GM12878 (cell line): ENCODE measurements at regions of chr11 and their contacts with region 1.

Region 1: DNA sequence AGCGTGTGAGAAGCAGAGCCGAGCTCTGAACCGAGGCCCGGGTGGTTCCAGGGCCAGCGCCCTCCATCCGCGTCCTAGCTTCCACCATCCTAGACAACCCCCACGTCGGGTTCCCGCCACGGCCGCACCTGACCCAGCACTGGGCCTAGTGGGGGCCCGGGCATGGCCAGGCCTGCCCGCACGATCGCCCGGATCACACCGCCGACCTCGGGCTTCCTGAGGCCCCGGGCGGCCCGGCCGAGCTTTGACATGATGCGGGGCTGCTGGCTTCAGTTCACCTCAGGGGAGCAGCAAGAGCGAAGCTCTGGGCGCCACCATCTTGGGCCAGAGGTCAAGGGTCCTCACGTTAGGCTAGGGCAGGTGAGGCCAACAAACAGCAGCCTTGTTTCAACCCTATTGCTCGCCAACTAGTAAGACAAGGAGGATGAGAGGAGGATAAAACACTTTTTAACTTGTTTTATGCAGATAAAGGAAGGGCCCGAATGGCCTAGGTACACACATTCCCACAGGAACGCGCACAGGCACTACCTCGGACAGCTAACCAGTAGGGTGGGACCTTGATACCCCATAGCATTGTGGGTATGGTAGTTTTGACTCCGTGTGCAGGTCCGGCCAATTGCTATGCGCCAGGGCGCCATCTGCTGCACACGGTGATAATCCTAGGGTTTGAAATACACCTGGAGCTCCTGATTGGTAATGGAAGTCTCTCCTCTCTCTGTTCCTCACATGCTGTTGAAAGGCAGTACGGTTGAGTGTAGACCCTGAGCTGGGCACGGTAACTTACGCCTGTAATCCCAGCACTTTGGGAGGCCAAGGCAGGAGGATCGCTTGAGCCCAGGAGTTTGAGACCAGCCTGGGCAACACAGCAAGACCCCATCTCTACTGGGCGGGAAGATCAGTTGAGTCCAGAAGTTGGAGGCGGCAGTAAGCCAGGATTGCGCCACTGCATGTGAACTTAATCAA is at the start of gene MRPL11:
- DNase-seq: peak; percentile 95
- ATAC-seq: peak; percentile 99
- H3K4me3 ChIP-seq: peak within 1 kb of the TSS; percentile 98
- H3K27ac ChIP-seq: peak within 1 kb of the TSS; percentile 85
- H3K4me1 ChIP-seq: no peaks in the 10 kb centered on the region
- H3K27me3 ChIP-seq: no peaks in the 10 kb centered on the region; a peak in 1 of 4 replicates
- CTCF ChIP-seq: peak; percentile 66 to 91 (median 87)
- EP300 ChIP-seq: no peak
- POLR2A ChIP-seq: peak; percentile 82
- RAD21 ChIP-seq: peak; percentile 37; the same call in 1 of the 2 replicates
- polyA plus RNA-seq, gene MRPL11: 43.5 to 80.9 TPM

Region 2: DNA sequence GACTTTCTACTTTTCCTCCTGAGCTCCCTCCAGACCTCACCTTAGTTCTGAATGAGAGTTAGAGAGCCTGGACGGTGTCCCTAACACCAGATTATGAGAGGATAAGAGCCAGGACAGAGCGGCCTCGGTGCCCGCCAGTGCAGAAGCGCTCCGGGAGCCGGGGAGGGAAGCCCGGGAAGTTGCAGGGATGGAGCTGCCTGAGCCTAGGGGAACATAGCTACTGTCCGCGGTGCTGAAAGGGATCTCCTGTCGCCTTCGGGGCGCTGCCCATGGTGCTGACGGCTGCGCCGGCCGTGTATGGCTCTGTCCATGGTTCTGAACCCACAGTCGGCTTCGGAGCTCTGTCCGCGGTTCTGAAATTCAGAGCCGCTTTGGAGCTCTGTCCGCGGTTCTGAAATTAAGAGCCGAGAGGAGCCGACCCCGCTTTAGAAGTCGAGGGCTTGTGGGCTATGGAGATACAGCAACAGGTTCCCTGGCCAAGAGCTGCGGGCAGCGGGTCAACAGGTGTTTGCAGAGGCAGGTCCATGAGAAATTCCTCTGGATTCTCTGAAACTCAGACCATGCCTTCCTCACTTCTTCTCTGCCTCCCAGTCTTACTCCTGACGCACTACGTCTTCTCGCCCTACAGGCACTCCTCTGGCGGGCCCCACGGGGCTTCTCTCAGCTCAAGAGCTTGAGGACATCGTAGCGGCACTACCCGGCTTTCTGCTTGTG is 17.1 kb before region 1 on chr11:
- CTCF ChIA-PET with region 1: interaction called, 18 read pairs
- POLR2A ChIA-PET with region 1: interaction called, 3 read pairs
- RAD21 ChIA-PET with region 1: interaction called, 10 read pairs
- SMC1A ChIA-PET with region 1: interaction called, 6 read pairs
- in situ Hi-C with region 1: no loop called
- intact Hi-C with region 1: no loop called
- DNase-seq: peak; percentile 37
- ATAC-seq: peak; percentile 57
- H3K4me3 ChIP-seq: no peak overlapping the region
- H3K27ac ChIP-seq: no peak overlapping the region
- H3K4me1 ChIP-seq: peaks cover 3% of the 10 kb centered on the region; the same call in 1 of the 2 replicates
- H3K27me3 ChIP-seq: peaks cover 0 to 8% of the 10 kb centered on the region in 2 experiments; a peak in 1 of 4 replicates
- CTCF ChIP-seq: no peak
- EP300 ChIP-seq: no peak
- POLR2A ChIP-seq: no peak
- RAD21 ChIP-seq: no peak

Region 3: DNA sequence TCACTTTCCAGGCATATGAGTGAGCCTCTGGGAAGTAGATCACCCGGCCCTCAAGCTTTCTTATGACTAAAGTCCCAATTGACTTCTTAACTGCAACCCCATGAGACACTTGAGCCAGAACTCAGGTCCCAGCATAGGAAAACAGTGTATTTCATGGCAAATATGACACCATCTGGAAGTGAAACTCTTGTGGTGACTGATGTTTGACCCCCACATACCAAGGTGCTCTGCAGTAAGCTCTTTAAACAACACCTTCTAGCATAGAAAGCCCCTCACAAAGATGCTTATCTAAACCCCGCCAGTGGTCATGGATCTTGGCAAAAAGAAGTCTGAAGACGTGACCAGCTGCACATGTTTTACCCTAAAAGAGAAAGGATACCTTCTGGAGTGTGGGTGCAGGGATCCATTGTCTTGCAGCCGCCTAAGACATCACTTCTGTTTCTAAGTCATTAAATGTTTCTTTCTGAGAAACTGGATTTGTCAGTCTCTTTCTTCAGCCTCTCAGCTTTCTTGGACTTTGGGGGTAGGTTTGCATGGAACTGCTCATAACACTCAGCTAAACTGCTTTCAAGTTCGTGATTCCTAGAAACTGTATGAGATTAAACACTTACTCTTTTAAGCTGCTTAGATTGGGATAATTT is 20.5 kb after region 1 on chr11:
- CTCF ChIA-PET with region 1: interaction called, 46 read pairs
- POLR2A ChIA-PET with region 1: interaction called, 7 read pairs
- RAD21 ChIA-PET with region 1: interaction called, 7 read pairs
- SMC1A ChIA-PET with region 1: interaction called, 8 read pairs
- in situ Hi-C with region 1: no loop called
- intact Hi-C with region 1: no loop called
- DNase-seq: peak; percentile 70
- ATAC-seq: peak; percentile 80
- H3K4me3 ChIP-seq: no peak overlapping the region; the same call in 1 of the 2 replicates
- H3K27ac ChIP-seq: peak overlapping the region; percentile 62
- H3K4me1 ChIP-seq: peaks cover 15% of the 10 kb centered on the region
- H3K27me3 ChIP-seq: no peaks in the 10 kb centered on the region
- CTCF ChIP-seq: no peak
- EP300 ChIP-seq: no peak
- POLR2A ChIP-seq: no peak
- RAD21 ChIP-seq: no peak